Sciatic nerve (tissue), 2 donors: ENCODE measurements at regions of chr20 and their contacts with region 1.

Region 1: DNA sequence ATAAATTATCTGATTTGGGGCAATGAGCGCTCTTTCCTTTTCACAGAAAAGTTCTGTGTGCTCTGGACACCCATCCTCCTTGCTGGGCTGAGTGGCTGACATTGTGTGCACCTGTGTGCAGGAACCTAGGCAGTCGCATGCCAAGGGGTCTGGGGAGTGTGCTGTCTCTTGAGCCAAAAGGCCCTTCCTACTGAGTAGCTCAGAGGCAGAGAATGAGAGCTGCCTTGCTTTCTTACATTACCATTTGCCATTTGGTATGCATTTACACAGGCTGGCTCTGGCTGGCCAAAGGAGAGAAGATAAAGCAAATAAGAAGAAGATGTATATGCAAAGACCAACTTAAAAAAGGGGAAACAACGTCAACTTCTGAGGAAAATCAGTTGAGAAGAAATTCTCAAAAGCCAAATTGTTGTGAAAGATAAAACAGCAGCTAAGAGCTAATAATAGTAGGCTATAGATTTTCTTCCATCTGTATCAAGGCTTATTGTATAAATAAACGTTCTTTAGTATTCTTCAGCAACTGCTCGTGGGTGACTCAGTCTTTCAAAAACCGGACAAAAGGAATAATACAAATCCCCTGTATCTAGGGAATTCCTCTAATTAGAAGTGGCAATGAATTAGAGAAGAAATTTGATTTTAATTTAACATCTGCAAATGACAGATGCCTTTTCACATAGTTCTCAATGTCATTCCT is 121.9 kb downstream of the INSM1 start:
- DNase-seq: no peak
- ATAC-seq: no peak

Region 2: DNA sequence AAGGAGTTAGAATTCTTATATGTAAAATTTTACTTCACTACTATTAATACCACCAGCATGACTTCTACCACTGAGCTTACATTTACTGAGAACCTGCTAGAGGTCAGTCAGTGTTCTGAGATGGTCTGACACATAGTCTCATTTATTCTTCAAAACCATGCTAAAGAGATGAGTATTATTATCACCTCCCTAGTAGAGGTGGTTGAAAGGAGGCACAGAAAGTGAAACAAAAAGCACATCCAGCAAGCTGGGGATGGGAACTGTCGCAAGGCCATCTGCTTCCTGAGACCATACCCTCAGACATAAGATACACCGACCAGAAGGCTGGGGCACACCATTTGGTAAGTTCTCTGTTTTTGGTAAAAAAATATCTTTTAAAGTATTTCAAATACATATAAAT is 15.8 kb after region 1 on chr20:
- intact Hi-C with region 1: no loop called
- DNase-seq: no peak
- ATAC-seq: no peak

Region 3: GRCh38 chr20:21569586-21569985 is 1079.8 kb after region 1 on chr20:
- intact Hi-C with region 1: loop called (anchors 5 kb)
- DNase-seq: no peak
- ATAC-seq: no peak